CD4-positive, alpha-beta T cell (primary cell): ENCODE measurements at regions of chr14 and their contacts with region 1.

Region 1: DNA sequence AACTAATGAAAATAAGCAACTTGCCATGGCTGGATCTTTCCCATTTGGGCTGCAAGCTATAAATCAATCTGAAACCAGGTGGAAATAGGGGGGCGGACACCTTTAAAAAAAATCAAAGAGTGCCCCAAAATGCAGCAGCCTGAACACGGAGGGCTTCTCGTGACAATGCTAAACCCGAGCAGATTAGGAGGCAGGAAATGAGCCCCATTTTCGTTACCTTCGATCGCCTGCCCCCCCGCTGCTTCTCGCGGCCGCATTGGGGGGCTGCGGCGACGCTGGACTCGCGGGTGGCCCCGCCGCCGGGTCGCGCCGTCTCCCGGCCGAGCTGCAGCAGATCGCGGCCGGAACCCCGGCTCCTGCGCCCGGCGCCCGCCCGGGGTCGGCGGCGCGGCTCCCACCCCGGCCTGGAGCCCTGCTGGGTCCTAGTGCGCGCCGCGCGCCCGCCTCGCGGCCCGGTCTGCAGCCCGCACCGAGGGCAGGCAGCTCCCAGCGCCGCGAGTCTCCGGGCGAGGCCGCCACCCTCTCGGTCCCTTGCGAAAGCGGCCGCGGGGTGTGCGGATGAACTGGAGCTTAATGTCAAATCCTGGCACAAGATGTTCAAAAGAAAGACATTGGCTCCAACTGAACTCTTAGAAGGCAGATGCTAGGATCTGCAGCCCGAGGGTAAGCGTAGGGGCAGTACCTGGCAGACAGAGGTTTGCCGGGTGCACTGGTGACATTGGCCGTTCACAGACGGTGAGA is 201.9 kb upstream of the FOXN3 start:
- DNase-seq: peak; percentile 35 to 84 (median 58)
- ATAC-seq: peak; percentile 42
- H3K4me3 ChIP-seq: peak overlapping the region; percentile 76
- H3K4me3 Mint-ChIP-seq: peak overlapping the region; percentile 96
- H3K27ac ChIP-seq: peak overlapping the region; percentile 62 to 86
- H3K27ac Mint-ChIP-seq: peak overlapping the region; percentile 99
- H3K4me1 ChIP-seq: peaks cover 41% of the 10 kb centered on the region
- H3K4me1 Mint-ChIP-seq: peaks cover 70% of the 10 kb centered on the region
- H3K27me3 ChIP-seq: no peaks in the 10 kb centered on the region
- H3K27me3 Mint-ChIP-seq: no peaks in the 10 kb centered on the region
- CTCF ChIP-seq: no peak

Region 2: GRCh38 chr14:88473816-88474215 is 1145.2 kb before region 1 on chr14:
- CTCF ChIA-PET with region 1: no interaction called
- POLR2A ChIA-PET with region 1: no interaction called
- intact Hi-C with region 1: no loop called
- DNase-seq: no peak
- ATAC-seq: no peak
- H3K4me3 ChIP-seq: no peak overlapping the region
- H3K4me3 Mint-ChIP-seq: no peak overlapping the region
- H3K27ac ChIP-seq: no peak overlapping the region
- H3K27ac Mint-ChIP-seq: no peak overlapping the region
- H3K4me1 ChIP-seq: no peaks in the 10 kb centered on the region
- H3K4me1 Mint-ChIP-seq: no peaks in the 10 kb centered on the region
- H3K27me3 ChIP-seq: no peaks in the 10 kb centered on the region
- H3K27me3 Mint-ChIP-seq: peaks cover 3% of the 10 kb centered on the region
- CTCF ChIP-seq: no peak

Region 3: DNA sequence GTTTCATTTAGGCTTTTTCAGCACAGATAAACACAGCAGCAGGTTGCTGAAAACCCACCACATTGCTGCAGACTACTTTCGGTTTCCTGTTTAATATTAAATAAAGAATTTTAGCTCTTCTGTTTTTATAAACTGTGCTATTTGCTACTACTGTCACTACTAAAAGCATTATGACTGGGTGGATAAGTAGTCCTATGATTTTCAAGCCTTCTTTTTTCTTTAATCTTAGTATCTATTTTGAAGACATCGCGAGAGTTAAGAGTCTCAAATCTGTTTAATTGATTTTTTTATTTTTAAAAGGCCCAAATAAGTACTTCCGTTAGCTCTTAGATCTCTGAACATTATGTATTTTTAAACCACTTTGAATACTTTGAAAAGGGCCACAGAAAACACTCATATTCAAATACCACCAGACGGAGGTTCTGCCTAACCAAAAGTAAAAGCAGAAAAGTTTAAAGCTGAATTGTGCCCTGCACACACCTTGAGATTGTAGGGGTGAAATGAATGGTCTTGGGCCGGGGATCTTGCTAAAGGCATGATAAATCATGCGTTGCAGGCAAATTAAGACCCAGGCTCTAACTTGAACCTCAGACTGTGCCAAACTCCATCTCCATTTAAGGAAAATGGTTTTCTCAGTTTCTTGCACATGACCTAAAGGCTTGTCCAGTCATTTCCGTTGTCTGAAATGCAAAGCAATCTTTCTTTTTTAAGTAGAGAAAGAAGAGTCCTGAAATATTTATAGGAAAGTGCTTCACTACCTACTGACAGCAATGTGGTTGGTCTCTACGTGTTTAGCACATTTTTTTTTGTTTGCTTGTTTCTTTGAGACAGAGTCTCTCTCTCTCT is 188.4 kb before region 1 on chr14:
- CTCF ChIA-PET with region 1: no interaction called
- POLR2A ChIA-PET with region 1: interaction called, 7 read pairs
- intact Hi-C with region 1: loop called in 1 of 2 experiments (anchors 5 kb)
- DNase-seq: peak in 4 of 14 experiments; percentile 23 to 79 (median 76)
- ATAC-seq: peak; percentile 83
- H3K4me3 ChIP-seq: peak overlapping the region; percentile 50
- H3K4me3 Mint-ChIP-seq: peak overlapping the region; percentile 76
- H3K27ac ChIP-seq: peak overlapping the region; percentile 57 to 59
- H3K27ac Mint-ChIP-seq: peak overlapping the region; percentile 80
- H3K4me1 ChIP-seq: peaks cover 24% of the 10 kb centered on the region
- H3K4me1 Mint-ChIP-seq: peaks cover 54% of the 10 kb centered on the region
- H3K27me3 ChIP-seq: no peaks in the 10 kb centered on the region
- H3K27me3 Mint-ChIP-seq: no peaks in the 10 kb centered on the region
- CTCF ChIP-seq: no peak

Region 4: GRCh38 chr14:89551955-89552354 is 67.0 kb before region 1 on chr14:
- CTCF ChIA-PET with region 1: no interaction called
- POLR2A ChIA-PET with region 1: no interaction called
- intact Hi-C with region 1: no loop called
- DNase-seq: no peak
- ATAC-seq: no peak
- H3K4me3 ChIP-seq: no peak overlapping the region
- H3K4me3 Mint-ChIP-seq: no peak overlapping the region
- H3K27ac ChIP-seq: no peak overlapping the region
- H3K27ac Mint-ChIP-seq: peak overlapping the region; percentile 56
- H3K4me1 ChIP-seq: peaks cover 12% of the 10 kb centered on the region
- H3K4me1 Mint-ChIP-seq: peaks cover 68% of the 10 kb centered on the region
- H3K27me3 ChIP-seq: no peaks in the 10 kb centered on the region
- H3K27me3 Mint-ChIP-seq: no peaks in the 10 kb centered on the region
- CTCF ChIP-seq: no peak

Region 5: GRCh38 chr14:89589400-89590118 is 29.4 kb before region 1 on chr14:
- CTCF ChIA-PET with region 1: no interaction called
- POLR2A ChIA-PET with region 1: no interaction called
- intact Hi-C with region 1: no loop called
- DNase-seq: peak in 3 of 14 experiments; percentile 12 to 51 (median 49)
- ATAC-seq: no peak
- H3K4me3 ChIP-seq: no peak overlapping the region
- H3K4me3 Mint-ChIP-seq: peak overlapping the region; percentile 17
- H3K27ac ChIP-seq: no peak overlapping the region
- H3K27ac Mint-ChIP-seq: peak overlapping the region; percentile 2
- H3K4me1 ChIP-seq: peaks cover 39% of the 10 kb centered on the region
- H3K4me1 Mint-ChIP-seq: peaks cover 86% of the 10 kb centered on the region
- H3K27me3 ChIP-seq: no peaks in the 10 kb centered on the region
- H3K27me3 Mint-ChIP-seq: no peaks in the 10 kb centered on the region
- CTCF ChIP-seq: no peak

Region 6: GRCh38 chr14:89641495-89642175 is 22.7 kb after region 1 on chr14:
- CTCF ChIA-PET with region 1: interaction called, 3 read pairs
- POLR2A ChIA-PET with region 1: interaction called, 23 read pairs
- intact Hi-C with region 1: loop called in 1 of 2 experiments (anchors 2 kb)
- DNase-seq: peak in 4 of 14 experiments; percentile 27 to 73 (median 70)
- ATAC-seq: peak; percentile 83
- H3K4me3 ChIP-seq: peak overlapping the region; percentile 24
- H3K4me3 Mint-ChIP-seq: peak overlapping the region; percentile 72
- H3K27ac ChIP-seq: peak overlapping the region; percentile 25 to 80
- H3K27ac Mint-ChIP-seq: peak overlapping the region; percentile 94
- H3K4me1 ChIP-seq: peaks cover 13% of the 10 kb centered on the region
- H3K4me1 Mint-ChIP-seq: peaks cover 59% of the 10 kb centered on the region
- H3K27me3 ChIP-seq: no peaks in the 10 kb centered on the region
- H3K27me3 Mint-ChIP-seq: no peaks in the 10 kb centered on the region
- CTCF ChIP-seq: no peak

Region 7: GRCh38 chr14:89701211-89702043 is 82.4 kb after region 1 on chr14:
- CTCF ChIA-PET with region 1: interaction called, 5 read pairs
- POLR2A ChIA-PET with region 1: interaction called, 3 read pairs
- intact Hi-C with region 1: loop called in 1 of 2 experiments (anchors 2 kb)
- DNase-seq: peak; percentile 70 to 92 (median 80)
- ATAC-seq: peak; percentile 86
- H3K4me3 ChIP-seq: peak overlapping the region; percentile 62
- H3K4me3 Mint-ChIP-seq: peak overlapping the region; percentile 87
- H3K27ac ChIP-seq: peak overlapping the region; percentile 58 to 70
- H3K27ac Mint-ChIP-seq: peak overlapping the region; percentile 82
- H3K4me1 ChIP-seq: peaks cover 26% of the 10 kb centered on the region
- H3K4me1 Mint-ChIP-seq: peaks cover 49% of the 10 kb centered on the region
- H3K27me3 ChIP-seq: no peaks in the 10 kb centered on the region
- H3K27me3 Mint-ChIP-seq: no peaks in the 10 kb centered on the region
- CTCF ChIP-seq: no peak

Region 8: DNA sequence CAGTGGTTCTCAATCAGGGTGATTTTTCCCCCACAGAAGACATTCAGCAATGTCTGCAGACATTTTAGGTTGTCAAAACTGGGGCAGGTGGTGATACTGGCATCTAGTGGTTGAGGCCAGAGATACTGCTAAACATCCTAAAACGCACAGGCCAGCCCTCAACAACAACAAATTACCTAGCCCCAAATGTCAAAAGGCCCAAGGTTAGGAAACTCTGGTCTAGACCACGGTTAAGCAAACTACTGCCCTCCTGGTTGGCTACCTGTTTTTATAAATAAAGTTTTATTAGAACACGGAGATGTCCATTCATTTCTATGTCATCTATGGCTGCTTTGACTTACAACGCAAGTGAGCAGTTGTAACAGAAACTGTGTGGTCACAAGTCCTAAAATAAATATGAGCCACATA is 148.9 kb after region 1 on chr14:
- CTCF ChIA-PET with region 1: no interaction called
- POLR2A ChIA-PET with region 1: interaction called, 6 read pairs
- intact Hi-C with region 1: loop called (anchors 2 to 5 kb)
- DNase-seq: peak; percentile 46 to 86 (median 57)
- ATAC-seq: peak; percentile 96
- H3K4me3 ChIP-seq: no peak overlapping the region
- H3K4me3 Mint-ChIP-seq: peak overlapping the region; percentile 52
- H3K27ac ChIP-seq: no peak overlapping the region
- H3K27ac Mint-ChIP-seq: peak overlapping the region; percentile 52
- H3K4me1 ChIP-seq: peaks cover 21% of the 10 kb centered on the region
- H3K4me1 Mint-ChIP-seq: peaks cover 43% of the 10 kb centered on the region
- H3K27me3 ChIP-seq: no peaks in the 10 kb centered on the region
- H3K27me3 Mint-ChIP-seq: no peaks in the 10 kb centered on the region
- CTCF ChIP-seq: peak; percentile 82